Activated CD8-positive, alpha-beta memory T cell treated with anti-CD3 and anti-CD28 coated beads, Interleukin-2, amount 10 ng/mL, durations not matched to agents 7 days and 5 days (primary cell): ENCODE measurements at regions of chr10 and their contacts with region 1.

Region 1: DNA sequence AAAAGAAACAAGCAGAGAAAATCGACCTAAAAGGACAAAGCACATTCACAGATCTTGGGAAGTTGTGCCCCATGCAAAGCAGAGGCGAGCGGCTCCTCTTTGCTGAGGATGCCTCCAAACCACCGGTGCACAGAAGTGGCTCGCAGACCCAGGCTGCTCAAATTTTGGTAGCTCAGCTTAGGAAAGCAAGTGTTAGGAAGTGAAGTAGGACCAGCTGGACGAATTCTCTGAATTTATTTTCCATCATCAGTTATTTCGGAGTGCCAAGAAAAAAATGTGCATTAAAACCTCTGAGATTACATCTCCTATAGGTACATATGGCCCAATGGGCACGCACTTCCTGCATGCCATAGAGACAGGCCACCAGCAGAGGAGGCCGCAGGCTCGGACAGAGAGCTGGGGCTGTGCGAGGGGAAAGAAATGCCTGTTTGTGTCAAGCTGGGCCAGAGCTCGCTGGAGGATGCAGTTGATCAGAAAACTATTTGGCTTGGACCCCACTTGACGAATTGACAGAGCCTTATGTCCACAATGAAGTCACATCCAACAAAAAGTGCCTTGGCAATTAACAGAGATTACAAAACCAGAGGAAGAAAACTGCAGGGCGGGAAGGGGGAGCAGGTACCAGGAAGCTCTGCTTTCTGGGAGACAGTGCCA is 122.3 kb upstream of the LYZL2 start:
- DNase-seq: peak; percentile 92
- ATAC-seq: peak; percentile 90
- H3K4me3 Mint-ChIP-seq: peak overlapping the region; percentile 26
- H3K27ac Mint-ChIP-seq: peak overlapping the region; percentile 80
- H3K4me1 Mint-ChIP-seq: peaks cover 55% of the 10 kb centered on the region
- H3K27me3 Mint-ChIP-seq: no peaks in the 10 kb centered on the region

Region 2: GRCh38 chr10:30600005-30600404 is 151.8 kb before region 1 on chr10:
- CTCF ChIA-PET with region 1: no interaction called
- DNase-seq: no peak
- ATAC-seq: peak; percentile 36
- H3K4me3 Mint-ChIP-seq: no peak overlapping the region
- H3K27ac Mint-ChIP-seq: no peak overlapping the region
- H3K4me1 Mint-ChIP-seq: peaks cover 3% of the 10 kb centered on the region
- H3K27me3 Mint-ChIP-seq: peaks cover 26% of the 10 kb centered on the region

Region 3: GRCh38 chr10:30722956-30723620 is 28.7 kb before region 1 on chr10:
- CTCF ChIA-PET with region 1: interaction called, 36 read pairs
- DNase-seq: no peak
- ATAC-seq: no peak
- H3K4me3 Mint-ChIP-seq: no peak overlapping the region
- H3K27ac Mint-ChIP-seq: no peak overlapping the region
- H3K4me1 Mint-ChIP-seq: peaks cover 37% of the 10 kb centered on the region
- H3K27me3 Mint-ChIP-seq: no peaks in the 10 kb centered on the region

Region 4: DNA sequence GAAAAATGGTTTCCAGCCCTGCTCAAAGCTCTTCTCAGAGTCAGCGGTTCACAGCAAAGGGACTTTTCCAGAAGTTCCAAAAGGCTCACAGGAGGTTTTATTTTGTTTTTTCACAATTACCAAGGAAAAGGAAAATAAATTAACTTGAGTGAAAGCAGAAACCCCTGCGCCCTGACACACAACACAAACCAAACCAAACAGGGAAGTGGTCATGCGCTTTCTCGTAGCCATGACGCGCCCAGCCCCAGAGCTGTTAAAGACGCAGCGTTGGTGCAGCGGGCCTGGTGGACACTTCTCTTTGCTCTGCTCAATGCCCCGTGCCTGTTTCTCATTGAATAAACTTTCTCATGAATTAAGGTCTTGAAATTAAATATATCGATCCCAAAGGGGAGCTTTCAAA is 12.1 kb after region 1 on chr10:
- CTCF ChIA-PET with region 1: interaction called, 12 read pairs
- DNase-seq: peak; percentile 55
- ATAC-seq: peak; percentile 52
- H3K4me3 Mint-ChIP-seq: no peak overlapping the region
- H3K27ac Mint-ChIP-seq: peak overlapping the region; percentile 50
- H3K4me1 Mint-ChIP-seq: peaks cover 27% of the 10 kb centered on the region
- H3K27me3 Mint-ChIP-seq: peaks cover 20% of the 10 kb centered on the region

Region 5: DNA sequence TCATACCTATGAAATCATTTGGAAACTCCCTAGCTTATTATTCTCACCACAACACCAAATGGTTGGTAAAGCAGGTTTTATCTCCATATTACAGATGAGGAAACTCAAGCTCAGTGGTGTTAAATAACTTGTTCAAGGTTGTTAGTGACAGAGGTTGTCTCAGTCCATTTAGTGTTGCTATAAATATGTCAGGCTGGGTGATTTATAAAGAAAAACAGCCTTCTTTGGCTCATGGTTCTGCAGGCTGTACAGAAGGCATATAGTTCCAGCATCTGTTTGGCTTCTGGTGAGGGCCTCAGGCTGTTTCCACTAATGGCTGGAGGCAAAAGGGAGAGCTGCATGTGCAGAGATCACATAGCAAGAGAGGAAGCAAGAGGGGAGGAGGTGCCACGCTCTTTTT is 183.3 kb after region 1 on chr10:
- CTCF ChIA-PET with region 1: no interaction called
- DNase-seq: no peak
- ATAC-seq: no peak
- H3K4me3 Mint-ChIP-seq: no peak overlapping the region
- H3K27ac Mint-ChIP-seq: no peak overlapping the region
- H3K4me1 Mint-ChIP-seq: peaks cover 6% of the 10 kb centered on the region
- H3K27me3 Mint-ChIP-seq: no peaks in the 10 kb centered on the region

Region 6: DNA sequence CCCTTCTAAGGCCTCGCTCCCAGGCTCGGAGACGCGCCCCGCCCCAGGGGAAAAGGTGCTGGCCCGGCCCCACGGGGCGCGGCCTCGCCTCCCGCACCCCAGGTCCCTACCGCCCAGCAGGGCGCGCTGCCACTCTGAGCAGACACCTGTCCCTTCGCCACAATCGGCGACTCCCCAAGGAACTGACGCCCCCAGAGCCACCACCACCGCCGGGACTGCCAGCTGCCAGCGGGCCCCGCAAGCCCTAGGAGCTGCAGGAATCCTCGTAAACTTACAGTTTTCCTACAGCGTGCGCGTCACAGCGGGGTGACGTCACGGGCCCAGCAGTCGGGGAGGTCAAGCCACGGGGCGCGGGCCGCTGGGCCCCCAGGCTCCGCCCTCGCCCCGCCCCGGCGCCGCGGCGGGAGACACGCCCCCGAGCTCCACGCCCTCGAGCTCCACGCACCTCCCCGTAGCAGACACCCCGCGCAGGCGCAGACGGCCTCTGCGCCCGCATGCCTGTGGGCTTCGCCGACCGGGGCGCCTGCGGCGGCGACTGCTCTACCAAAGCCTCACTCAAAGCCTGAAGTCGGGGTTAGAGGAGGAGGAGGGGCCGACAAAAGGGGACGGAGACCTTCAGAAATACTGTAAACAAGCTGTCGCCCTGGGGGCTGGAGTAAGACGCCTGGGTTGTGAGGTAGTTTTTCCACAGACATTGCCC is 279.9 kb after region 1 on chr10 and contains the start of gene ZNF438:
- CTCF ChIA-PET with region 1: interaction called, 11 read pairs
- DNase-seq: peak; percentile 95
- ATAC-seq: peak; percentile 89
- H3K4me3 Mint-ChIP-seq: peak within 1 kb of the TSS; percentile 81
- H3K27ac Mint-ChIP-seq: peak within 1 kb of the TSS; percentile 97
- H3K4me1 Mint-ChIP-seq: peaks cover 17% of the 10 kb centered on the region
- H3K27me3 Mint-ChIP-seq: no peaks in the 10 kb centered on the region
- total RNA-seq, gene ZNF438: 3.8 to 4.4 TPM

Region 7: DNA sequence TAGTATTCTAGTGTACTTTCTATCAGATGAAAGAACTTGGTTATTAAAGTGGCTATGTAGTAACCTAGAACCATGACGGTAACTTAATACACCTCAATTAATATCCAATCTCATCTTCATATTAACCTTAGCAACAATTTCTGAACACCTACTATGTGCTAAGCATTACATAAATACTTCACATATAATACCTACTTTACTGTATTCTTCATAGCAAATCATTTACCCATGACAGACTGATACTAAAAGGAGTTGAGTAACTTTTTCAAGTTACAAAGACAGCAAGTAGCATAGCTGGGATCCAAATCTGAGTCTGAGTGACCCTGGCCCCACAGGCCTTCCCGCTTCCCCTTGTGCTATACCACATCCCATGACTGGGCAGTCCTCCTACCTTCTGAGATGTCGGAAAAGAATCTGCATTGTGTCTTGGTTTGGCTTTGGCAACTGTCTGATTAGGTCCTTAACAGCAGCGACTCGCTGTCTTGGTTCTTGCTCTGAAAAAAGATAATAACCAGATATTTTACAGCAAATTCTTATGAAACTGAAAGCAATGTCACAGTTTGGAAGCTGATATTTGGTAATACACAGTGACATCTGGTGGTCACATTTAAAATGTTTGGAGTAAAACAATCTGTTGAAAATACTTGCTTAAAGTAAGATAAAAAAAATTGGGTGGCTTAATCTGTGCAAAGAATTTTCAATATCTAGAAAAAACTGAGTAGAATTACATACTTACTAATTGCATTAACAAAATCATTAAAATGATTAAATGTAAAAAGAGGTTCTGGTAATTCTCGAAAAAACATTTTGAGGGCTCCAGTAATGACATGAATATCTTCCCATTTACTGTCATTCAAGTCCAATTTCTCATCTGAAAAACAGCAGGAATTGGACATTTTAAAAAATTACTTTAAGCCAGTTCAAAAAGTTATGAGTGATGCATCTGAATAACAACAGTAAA is 1056.7 kb after region 1 on chr10:
- CTCF ChIA-PET with region 1: interaction called, 14 read pairs
- DNase-seq: peak; percentile 49
- ATAC-seq: peak; percentile 77
- H3K4me3 Mint-ChIP-seq: peak overlapping the region; percentile 69
- H3K27ac Mint-ChIP-seq: peak overlapping the region; percentile 81
- H3K4me1 Mint-ChIP-seq: peaks cover 12% of the 10 kb centered on the region
- H3K27me3 Mint-ChIP-seq: no peaks in the 10 kb centered on the region